PC-9 (cell line): ENCODE measurements at regions of chr14 and their contacts with region 1.

Region 1: DNA sequence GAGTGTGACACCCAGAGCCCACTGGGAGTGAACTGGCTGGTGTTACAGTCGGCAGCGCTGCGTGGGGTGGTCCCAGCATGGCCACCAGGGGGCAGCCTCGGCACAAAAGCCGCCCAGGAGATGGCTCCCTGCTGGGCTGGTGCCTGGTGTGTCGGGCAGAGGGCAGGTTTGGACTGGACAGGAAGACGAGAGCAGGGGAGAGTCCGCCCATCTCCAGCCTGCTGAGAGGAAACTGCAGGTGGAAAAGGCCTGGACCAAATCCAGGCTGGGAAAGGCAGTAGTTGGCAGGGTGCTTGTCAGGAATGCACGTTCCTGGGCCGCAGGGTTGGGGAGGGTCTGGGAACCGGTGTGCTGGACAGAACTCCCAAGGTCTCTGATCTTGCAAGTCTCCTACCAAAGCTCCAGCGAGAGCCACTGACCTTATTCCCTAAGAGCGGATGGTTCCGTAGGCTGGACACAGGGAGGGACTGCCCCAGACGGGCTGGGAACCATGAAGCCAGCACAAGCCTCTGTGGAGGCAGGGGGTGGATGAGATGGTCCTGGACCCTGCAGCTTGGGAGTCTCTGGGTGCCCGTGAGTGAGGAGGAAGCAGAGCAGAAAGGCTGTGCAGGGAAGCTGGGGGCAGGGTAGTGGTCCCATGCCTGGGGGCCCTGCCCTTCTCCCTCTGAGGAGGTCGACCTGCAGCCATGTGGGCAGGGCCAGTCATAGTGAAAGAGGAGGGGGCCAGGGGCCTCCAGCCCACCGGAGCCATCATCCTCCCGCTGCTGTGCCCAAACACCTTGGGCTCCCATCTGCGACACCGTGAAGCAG is 1.8 kb downstream of the AHNAK2 start:
- DNase-seq: peak; percentile 67 to 86
- H3K4me3 ChIP-seq: no peak overlapping the region
- H3K27ac ChIP-seq: no peak overlapping the region
- H3K4me1 ChIP-seq: peaks cover 60% of the 10 kb centered on the region
- H3K27me3 ChIP-seq: no peaks in the 10 kb centered on the region
- CTCF ChIP-seq: peak; percentile 87

Region 2: DNA sequence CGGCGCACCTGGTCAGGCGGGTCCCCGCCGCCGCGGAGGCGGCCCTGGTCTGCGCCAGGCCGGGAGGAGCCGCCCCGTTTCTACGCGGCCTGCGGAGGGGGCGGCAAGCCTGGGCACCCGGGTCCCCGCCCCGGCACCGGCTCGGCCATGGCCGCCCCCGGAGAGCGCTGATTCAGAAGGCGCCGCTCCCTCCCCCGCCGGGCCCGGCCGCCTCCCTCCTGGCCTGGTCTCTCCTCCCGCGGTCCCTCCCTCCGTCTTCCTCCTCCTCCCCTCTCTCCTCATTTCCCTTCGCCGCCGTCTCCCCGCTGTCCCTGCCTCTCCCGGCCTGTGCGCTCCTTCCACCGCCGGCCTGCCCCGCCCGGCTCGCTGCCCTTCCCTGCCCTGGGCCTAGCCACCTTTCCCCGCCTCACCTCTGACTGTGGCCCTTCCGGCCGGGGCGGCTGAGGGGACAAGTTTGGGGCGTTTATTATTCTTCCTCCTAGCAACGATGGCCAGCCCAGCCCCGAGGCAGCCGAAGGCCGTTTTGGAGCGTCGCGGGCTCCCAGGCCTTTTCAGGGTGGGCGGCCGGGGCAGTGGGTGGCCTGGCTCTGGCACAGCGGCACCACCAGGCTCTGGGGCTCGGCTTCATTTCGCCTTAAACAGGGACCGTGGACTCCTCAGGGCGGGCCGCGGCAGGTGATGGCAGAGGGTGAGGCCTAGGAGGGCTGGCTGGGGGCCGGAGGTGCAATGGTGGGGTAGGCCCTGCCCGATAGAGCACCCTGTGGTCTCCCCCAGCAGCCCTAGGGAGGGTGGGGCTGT is 110.6 kb before region 1 on chr14:
- CTCF ChIA-PET with region 1: no interaction called
- POLR2A ChIA-PET with region 1: interaction called, 12 read pairs
- intact Hi-C with region 1: no loop called
- DNase-seq: peak; percentile 54 to 70
- H3K4me3 ChIP-seq: peak overlapping the region; percentile 95
- H3K27ac ChIP-seq: peak overlapping the region; percentile 54
- H3K4me1 ChIP-seq: peaks cover 11% of the 10 kb centered on the region
- H3K27me3 ChIP-seq: no peaks in the 10 kb centered on the region
- CTCF ChIP-seq: no peak

Region 3: DNA sequence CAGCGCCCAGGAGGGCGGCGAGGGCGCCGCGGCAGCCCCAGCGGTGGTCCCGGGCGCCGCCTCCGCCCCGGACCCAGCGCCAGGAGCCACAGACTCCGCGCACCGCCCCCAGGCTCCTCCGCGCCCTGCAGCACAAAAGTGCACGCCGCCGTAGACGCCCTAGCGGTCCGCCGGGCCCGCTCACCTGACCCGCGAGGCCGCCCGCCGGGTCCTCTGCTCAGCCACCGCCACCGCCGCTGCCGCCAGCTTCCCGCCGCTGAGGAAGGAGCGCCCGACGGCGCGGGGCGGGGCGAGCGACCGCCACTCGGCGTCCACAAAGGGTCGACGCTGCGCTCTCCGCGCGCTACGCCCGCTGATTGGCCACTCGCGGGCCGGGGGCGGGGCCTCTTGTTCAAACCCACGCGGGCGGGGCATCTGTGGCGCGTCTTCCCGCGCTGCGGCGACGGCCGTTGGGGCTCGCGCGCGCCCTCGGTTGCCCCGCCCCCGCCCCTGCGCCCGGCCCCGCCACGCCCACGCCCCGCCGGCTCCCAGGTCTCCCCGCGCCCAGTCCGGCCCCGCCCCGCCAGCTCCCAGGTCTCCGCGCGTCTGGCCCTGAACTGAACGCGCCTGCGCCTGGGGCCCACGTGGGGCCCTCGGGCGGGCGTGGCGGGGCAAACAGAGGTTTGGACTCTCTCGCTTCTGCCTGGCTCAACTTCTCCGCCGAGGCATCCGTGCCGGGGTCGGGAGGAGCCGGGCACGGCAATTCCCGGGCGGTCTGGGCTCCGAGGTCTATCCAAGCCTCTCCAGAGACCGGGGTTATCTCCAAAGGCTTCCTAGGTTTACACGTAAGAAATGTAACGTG is 44.6 kb after region 1 on chr14 and contains the start of gene CDCA4:
- CTCF ChIA-PET with region 1: interaction called, 4 read pairs
- POLR2A ChIA-PET with region 1: interaction called, 3 read pairs
- intact Hi-C with region 1: loop called (anchors 2 kb)
- DNase-seq: peak; percentile 84 to 93
- H3K4me3 ChIP-seq: peak within 1 kb of the TSS; percentile 86
- H3K27ac ChIP-seq: peak within 1 kb of the TSS; percentile 95
- H3K4me1 ChIP-seq: peaks cover 78% of the 10 kb centered on the region
- H3K27me3 ChIP-seq: no peaks in the 10 kb centered on the region
- CTCF ChIP-seq: no peak
- total RNA-seq, gene CDCA4: 24.9 and 27.7 TPM in 2 replicates

Region 4: DNA sequence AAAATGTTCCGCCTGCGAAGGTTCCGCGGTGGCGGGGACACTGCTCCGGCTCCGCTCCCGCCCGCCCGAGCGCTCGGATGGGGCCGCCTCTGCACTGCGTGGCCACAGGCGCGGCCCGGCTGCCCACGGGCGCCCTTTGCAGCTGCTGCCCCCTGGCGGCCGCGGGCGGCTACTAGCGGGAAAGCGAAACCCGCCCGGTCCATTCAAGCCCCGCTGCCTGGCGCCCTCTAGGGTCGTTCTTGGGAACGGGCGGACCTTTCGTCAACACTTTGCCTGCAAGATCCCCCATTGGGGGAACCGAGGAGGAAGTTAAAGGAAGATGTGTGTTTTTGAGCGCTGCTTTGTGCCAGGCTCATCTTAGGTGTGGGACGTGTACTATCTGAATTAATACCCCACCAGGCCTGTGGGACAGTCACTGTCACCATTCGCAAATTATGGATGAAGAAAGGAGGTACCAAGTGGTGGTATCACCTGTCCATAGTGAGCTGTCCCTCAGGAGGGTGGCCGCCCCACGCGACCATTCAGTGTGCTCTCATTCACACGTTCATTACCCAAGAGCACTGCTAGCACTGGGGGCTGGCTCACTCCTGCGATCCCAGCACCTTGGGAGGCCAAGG is 69.4 kb after region 1 on chr14:
- CTCF ChIA-PET with region 1: interaction called, 9 read pairs
- POLR2A ChIA-PET with region 1: interaction called, 3 read pairs
- intact Hi-C with region 1: loop called (anchors 1 kb)
- DNase-seq: peak; percentile 56 to 83
- H3K4me3 ChIP-seq: no peak overlapping the region
- H3K27ac ChIP-seq: no peak overlapping the region
- H3K4me1 ChIP-seq: peaks cover 9% of the 10 kb centered on the region
- H3K27me3 ChIP-seq: no peaks in the 10 kb centered on the region
- CTCF ChIP-seq: peak; percentile 98

Region 5: GRCh38 chr14:105203057-105203531 is 226.7 kb after region 1 on chr14:
- CTCF ChIA-PET with region 1: no interaction called
- POLR2A ChIA-PET with region 1: no interaction called
- intact Hi-C with region 1: loop called (anchors 5 kb)
- DNase-seq: peak in 1 of 2 experiments; percentile 67
- H3K4me3 ChIP-seq: no peak overlapping the region
- H3K27ac ChIP-seq: no peak overlapping the region
- H3K4me1 ChIP-seq: peaks cover 23% of the 10 kb centered on the region
- H3K27me3 ChIP-seq: no peaks in the 10 kb centered on the region
- CTCF ChIP-seq: peak; percentile 95

Region 6: GRCh38 chr14:105300792-105301533 is 324.6 kb after region 1 on chr14 and contains the start of gene BRF1:
- CTCF ChIA-PET with region 1: no interaction called
- POLR2A ChIA-PET with region 1: no interaction called
- intact Hi-C with region 1: loop called (anchors 5 kb)
- DNase-seq: peak; percentile 86 to 97
- H3K4me3 ChIP-seq: peak within 1 kb of the TSS; percentile 82
- H3K27ac ChIP-seq: peak within 1 kb of the TSS; percentile 55
- H3K4me1 ChIP-seq: peaks cover 9% of the 10 kb centered on the region
- H3K27me3 ChIP-seq: no peaks in the 10 kb centered on the region
- CTCF ChIP-seq: no peak
- total RNA-seq, gene BRF1: 24.8 and 31.2 TPM in 2 replicates

Region 7: DNA sequence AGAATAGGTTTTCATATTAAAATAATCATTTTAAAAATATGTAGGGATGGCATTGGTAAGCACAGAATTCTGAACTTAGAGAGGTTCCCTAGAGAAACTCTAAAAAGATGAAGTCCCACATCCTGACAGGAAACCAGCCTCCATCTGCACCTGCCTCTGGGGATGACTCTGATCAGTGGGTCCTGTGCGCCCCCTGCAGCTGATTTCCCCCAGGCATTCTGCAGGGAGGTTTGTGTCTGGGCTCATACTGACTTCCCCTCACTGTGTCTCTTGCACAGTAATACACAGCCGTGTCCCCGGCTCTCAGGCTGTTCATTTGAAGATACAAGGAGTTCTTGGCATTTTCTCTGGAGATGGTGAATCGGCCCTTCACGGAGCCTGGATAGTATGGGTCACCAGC is 1152.9 kb after region 1 on chr14:
- CTCF ChIA-PET with region 1: no interaction called
- POLR2A ChIA-PET with region 1: no interaction called
- intact Hi-C with region 1: no loop called
- DNase-seq: no peak
- H3K4me3 ChIP-seq: no peak overlapping the region
- H3K27ac ChIP-seq: no peak overlapping the region
- H3K4me1 ChIP-seq: no peaks in the 10 kb centered on the region
- H3K27me3 ChIP-seq: no peaks in the 10 kb centered on the region; the same call in 1 of the 2 replicates
- CTCF ChIP-seq: no peak